ENCODE measurements at regions of chr11 and their contacts with region 1.

Region 1: DNA sequence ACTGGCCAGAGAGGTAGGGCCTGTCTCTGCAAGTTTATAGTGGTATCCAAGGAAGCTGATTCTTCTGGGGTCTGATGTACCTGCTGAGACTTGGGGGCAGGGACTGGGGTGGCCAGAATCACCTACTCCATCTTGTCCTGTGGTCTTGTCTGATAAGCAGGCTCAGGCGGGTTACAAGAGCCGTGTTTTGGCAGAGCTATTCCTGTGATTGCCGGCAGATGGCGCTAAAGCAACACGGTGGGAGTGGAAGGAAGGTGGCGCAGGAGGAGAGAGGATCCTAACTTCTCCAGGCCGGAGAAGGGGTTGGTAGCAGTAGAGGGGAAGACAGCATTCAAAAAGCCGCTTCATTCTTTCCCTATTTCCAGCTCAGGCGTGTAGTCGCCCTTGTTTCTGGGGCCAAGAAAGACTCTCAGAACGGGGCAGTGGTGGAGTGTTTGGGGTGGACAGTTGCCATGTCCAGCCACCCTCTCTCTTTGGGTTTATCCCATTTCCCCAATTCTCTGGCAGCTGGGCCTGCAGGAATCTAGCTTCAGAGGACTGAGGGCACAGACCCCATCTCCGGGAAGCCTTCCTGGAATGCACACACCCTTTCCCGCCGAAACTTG is 15.1 kb downstream of the CHRM1 start:
- DNase-seq: peak; percentile 84 to 87
- ATAC-seq: peak; percentile 80 to 90
- H3K4me3 ChIP-seq: no peak overlapping the region
- H3K27ac ChIP-seq: no peak overlapping the region
- H3K4me1 ChIP-seq: 0 out of 3 replicates have a peak, but pooled peaks cover 3% of the 10 kb centered on the region
- CTCF ChIP-seq: peak; percentile 94
- EP300 ChIP-seq: no peak
- POLR2A ChIP-seq: no peak
- RAD21 ChIP-seq: peak; percentile 96 to 99

Region 2: DNA sequence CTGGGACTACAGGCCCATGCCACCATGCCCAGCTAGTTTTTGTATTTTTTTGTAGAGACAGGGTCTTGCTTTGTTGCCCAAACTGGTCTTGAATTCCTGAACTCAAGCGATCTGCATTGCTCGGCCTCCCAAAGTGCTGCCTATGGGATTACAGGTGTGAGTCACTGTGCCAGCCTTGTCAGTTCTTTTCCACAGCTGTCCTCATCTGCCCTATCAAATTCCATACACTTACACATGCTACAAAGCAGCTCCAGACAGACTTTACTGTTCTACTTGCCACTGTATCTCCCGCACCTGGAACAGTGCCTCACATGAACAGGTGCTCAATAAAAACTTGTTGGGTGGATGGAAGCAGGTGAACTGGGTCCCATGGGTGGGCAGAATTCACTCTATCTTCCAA is 82.4 kb before region 1 on chr11:
- CTCF ChIA-PET with region 1: no interaction called
- POLR2A ChIA-PET with region 1: no interaction called
- DNase-seq: no peak
- ATAC-seq: no peak
- H3K4me3 ChIP-seq: no peak overlapping the region
- H3K27ac ChIP-seq: no peak overlapping the region
- H3K4me1 ChIP-seq: no peaks in the 10 kb centered on the region
- CTCF ChIP-seq: no peak
- EP300 ChIP-seq: no peak
- POLR2A ChIP-seq: no peak
- RAD21 ChIP-seq: no peak

Region 3: GRCh38 chr11:62880803-62881578 is 25.0 kb before region 1 on chr11 and contains the start of gene SLC3A2:
- CTCF ChIA-PET with region 1: interaction called, 21 read pairs
- POLR2A ChIA-PET with region 1: interaction called, 3 read pairs
- DNase-seq: peak; percentile 86 to 88
- ATAC-seq: peak; percentile 85 to 94
- H3K4me3 ChIP-seq: peak within 1 kb of the TSS; percentile 89
- H3K27ac ChIP-seq: peak within 1 kb of the TSS; percentile 97 to 100
- H3K4me1 ChIP-seq: peaks cover 47% of the 10 kb centered on the region
- CTCF ChIP-seq: peak; percentile 74
- EP300 ChIP-seq: no peak
- POLR2A ChIP-seq: peak; percentile 99
- RAD21 ChIP-seq: peak; percentile 25 to 47; a peak in 4 of 5 replicates
- polyA plus RNA-seq, gene SLC3A2: 1,064 and 1,133 TPM in 2 replicates

Region 4: GRCh38 chr11:62931499-62932278 is 25.7 kb after region 1 on chr11:
- CTCF ChIA-PET with region 1: interaction called, 36 read pairs
- POLR2A ChIA-PET with region 1: no interaction called
- DNase-seq: no peak
- ATAC-seq: no peak
- H3K4me3 ChIP-seq: no peak overlapping the region
- H3K27ac ChIP-seq: no peak overlapping the region
- H3K4me1 ChIP-seq: peaks cover 9% of the 10 kb centered on the region; the same call in 1 of the 3 replicates
- CTCF ChIP-seq: no peak
- EP300 ChIP-seq: no peak
- POLR2A ChIP-seq: no peak
- RAD21 ChIP-seq: no peak

Region 5: GRCh38 chr11:62974848-62975522 is 69.0 kb after region 1 on chr11:
- CTCF ChIA-PET with region 1: interaction called, 53 read pairs
- POLR2A ChIA-PET with region 1: no interaction called
- DNase-seq: peak; percentile 38 to 54
- ATAC-seq: peak; percentile 83 to 93
- H3K4me3 ChIP-seq: no peak overlapping the region
- H3K27ac ChIP-seq: no peak overlapping the region
- H3K4me1 ChIP-seq: no peaks in the 10 kb centered on the region
- CTCF ChIP-seq: peak; percentile 47
- EP300 ChIP-seq: no peak
- POLR2A ChIP-seq: no peak
- RAD21 ChIP-seq: peak in 1 of 2 experiments; percentile 15; a peak in 1 of 5 replicates

Region 6: DNA sequence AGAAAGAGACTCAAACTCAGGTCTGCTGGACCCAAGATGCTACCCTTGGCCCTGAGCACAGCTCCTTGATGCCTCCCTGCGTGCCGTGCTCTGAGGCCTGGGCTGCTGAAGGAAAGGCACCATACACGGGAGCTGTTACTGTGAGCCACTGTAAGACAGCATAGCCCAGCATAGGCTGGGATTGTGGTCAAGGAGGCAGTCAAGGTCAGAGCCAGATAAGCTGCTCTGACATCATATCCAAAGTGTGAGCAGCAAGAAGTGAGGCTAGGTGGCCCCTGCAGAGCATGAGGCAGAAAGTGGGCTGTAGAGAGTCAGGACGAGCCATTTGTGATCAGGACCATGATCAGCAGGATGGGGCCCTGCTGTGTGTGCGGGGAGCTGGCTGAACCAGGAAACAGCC is 101.9 kb after region 1 on chr11:
- CTCF ChIA-PET with region 1: interaction called, 18 read pairs
- POLR2A ChIA-PET with region 1: no interaction called
- DNase-seq: no peak
- ATAC-seq: no peak
- H3K4me3 ChIP-seq: no peak overlapping the region
- H3K27ac ChIP-seq: no peak overlapping the region
- H3K4me1 ChIP-seq: no peaks in the 10 kb centered on the region
- CTCF ChIP-seq: no peak
- EP300 ChIP-seq: no peak
- POLR2A ChIP-seq: no peak
- RAD21 ChIP-seq: no peak

Region 7: GRCh38 chr11:63023841-63024648 is 118.0 kb after region 1 on chr11:
- CTCF ChIA-PET with region 1: interaction called, 461 read pairs
- POLR2A ChIA-PET with region 1: no interaction called
- DNase-seq: peak; percentile 74 to 81
- ATAC-seq: peak; percentile 82 to 94
- H3K4me3 ChIP-seq: no peak overlapping the region
- H3K27ac ChIP-seq: no peak overlapping the region
- H3K4me1 ChIP-seq: no peaks in the 10 kb centered on the region
- CTCF ChIP-seq: peak; percentile 86
- EP300 ChIP-seq: no peak
- POLR2A ChIP-seq: no peak
- RAD21 ChIP-seq: peak; percentile 81 to 89

Region 8: GRCh38 chr11:63212742-63213141 is 306.7 kb after region 1 on chr11:
- CTCF ChIA-PET with region 1: interaction called, 34 read pairs
- POLR2A ChIA-PET with region 1: no interaction called
- DNase-seq: peak; percentile 26 to 30
- ATAC-seq: peak in 1 of 2 experiments; percentile 52; a peak in 3 of 6 replicates
- H3K4me3 ChIP-seq: no peak overlapping the region
- H3K27ac ChIP-seq: no peak overlapping the region
- H3K4me1 ChIP-seq: no peaks in the 10 kb centered on the region
- CTCF ChIP-seq: peak; percentile 64
- EP300 ChIP-seq: no peak
- POLR2A ChIP-seq: no peak
- RAD21 ChIP-seq: peak; percentile 66 to 71